Activated CD4-positive, alpha-beta T cell treated with anti-CD3 and anti-CD28 coated beads, Interleukin-2, amount 10 ng/mL, durations not matched to agents 7 days and 5 days (primary cell): ENCODE measurements at regions of chr19 and their contacts with region 1.

Region 1: DNA sequence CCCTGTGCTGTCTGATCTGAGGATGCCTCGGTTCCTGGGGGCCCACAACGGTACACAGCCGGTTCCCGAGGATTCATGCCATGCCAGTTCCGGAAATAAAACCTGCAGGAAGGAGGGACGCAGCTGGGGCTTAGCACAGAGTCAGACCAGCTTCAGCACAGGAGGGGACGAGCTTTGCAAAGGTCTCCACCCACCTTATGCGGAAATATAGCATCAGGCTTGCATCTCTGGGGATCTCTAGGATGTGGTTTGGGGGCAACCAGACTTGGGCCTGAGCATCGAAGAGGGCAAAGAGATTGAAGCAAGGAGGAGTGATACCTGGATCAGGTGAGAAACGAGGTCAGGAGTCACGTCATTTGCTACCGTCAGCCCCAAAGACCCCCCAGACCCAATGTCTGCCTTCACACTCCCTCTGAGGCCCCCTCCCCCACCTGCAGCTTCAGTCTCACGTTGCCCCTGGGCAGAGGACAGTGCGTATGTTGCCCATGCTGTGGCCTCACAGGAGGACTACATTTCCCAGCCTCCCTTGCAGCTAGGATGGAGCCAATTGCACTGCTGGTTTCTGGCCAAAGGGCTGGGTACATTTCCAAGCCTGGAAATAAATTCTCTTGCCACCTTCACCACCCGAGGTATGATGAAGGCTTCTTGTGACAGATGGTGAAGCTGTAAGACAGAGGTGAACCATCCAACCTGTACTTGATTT is 12.1 kb downstream of the TYK2 start:
- DNase-seq: no peak
- H3K4me3 Mint-ChIP-seq: no peak overlapping the region
- H3K27ac Mint-ChIP-seq: no peak overlapping the region
- H3K4me1 Mint-ChIP-seq: no peaks in the 10 kb centered on the region
- H3K27me3 Mint-ChIP-seq: no peaks in the 10 kb centered on the region

Region 2: DNA sequence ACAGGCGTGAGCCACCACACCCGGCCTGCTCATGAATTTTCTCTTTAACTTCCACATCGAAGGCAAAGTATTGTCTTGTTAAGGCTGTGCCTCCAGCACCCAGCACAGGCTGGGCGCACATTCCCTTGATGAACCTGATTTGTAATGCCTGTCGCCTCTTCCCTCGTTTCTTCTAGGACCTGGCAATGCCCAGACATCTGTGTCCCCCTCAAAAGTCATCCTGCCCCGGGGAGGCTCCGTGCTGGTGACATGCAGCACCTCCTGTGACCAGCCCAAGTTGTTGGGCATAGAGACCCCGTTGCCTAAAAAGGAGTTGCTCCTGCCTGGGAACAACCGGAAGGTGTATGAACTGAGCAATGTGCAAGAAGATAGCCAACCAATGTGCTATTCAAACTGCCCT is 93.7 kb before region 1 on chr19:
- CTCF ChIA-PET with region 1: interaction called, 6 read pairs
- POLR2A ChIA-PET with region 1: interaction called, 10 read pairs
- DNase-seq: no peak
- H3K4me3 Mint-ChIP-seq: no peak overlapping the region
- H3K27ac Mint-ChIP-seq: no peak overlapping the region
- H3K4me1 Mint-ChIP-seq: peaks cover 32% of the 10 kb centered on the region
- H3K27me3 Mint-ChIP-seq: no peaks in the 10 kb centered on the region

Region 3: GRCh38 chr19:10315335-10316214 is 52.7 kb before region 1 on chr19 and contains the start of gene FDX2:
- CTCF ChIA-PET with region 1: no interaction called
- POLR2A ChIA-PET with region 1: no interaction called
- DNase-seq: peak; percentile 92
- H3K4me3 Mint-ChIP-seq: peak within 1 kb of the TSS; percentile 80
- H3K27ac Mint-ChIP-seq: peak within 1 kb of the TSS; percentile 73
- H3K4me1 Mint-ChIP-seq: peaks cover 19% of the 10 kb centered on the region
- H3K27me3 Mint-ChIP-seq: no peaks in the 10 kb centered on the region
- total RNA-seq, gene FDX2: 5.5 to 9.0 TPM

Region 4: GRCh38 chr19:10353793-10354391 is 14.4 kb before region 1 on chr19:
- CTCF ChIA-PET with region 1: no interaction called
- POLR2A ChIA-PET with region 1: no interaction called
- DNase-seq: peak; percentile 41
- H3K4me3 Mint-ChIP-seq: no peak overlapping the region
- H3K27ac Mint-ChIP-seq: peak overlapping the region; percentile 25
- H3K4me1 Mint-ChIP-seq: no peaks in the 10 kb centered on the region
- H3K27me3 Mint-ChIP-seq: no peaks in the 10 kb centered on the region